ENCODE measurements at regions of chr18 and their contacts with region 1.

Region 1: DNA sequence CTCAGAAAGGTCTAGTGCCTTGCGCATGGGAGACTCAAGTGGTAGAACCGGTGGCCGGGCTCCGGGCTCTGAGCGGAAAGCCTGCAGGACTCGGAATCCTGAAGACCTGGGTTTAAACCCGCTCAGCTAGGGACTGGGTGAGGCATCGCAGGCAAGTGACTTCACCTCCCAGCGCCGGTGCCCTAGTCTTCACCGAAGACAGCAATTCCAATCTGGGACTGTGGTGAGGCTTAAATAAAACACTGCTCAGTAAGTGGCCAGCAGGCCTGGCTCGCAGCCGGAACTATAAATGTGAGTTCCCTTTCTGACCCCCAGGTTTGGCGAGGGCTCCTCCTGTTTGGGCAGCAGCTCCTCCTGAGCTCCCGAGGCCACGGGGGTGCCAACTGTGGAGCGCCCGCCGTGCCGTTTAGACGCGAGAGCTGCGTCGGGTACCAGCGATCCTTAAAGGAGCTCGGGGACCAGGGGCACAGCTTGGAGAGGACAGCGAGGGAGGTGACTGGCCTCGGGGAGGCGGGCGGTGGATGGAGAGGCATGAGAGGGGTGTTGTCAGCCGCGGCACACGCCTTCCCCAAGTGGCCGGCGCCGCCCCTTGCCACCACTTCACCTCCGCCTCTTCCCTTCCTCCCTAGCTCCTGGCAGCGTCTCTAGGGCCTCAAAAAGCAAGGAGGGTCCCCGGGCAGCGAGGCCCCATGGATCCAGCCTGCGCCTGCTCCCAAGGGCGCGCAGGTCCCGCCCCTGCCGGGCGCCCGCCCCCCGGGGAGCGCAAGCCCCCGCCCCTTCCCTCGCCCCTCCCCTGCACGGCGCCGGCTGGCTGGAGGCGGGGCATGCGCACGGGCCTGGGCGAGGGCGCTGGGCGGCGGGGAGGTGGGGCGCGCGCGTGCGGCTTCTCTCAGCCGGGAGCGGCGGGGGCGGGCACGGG is 736 bp upstream of the MTCL1 start:
- DNase-seq: peak; percentile 89
- H3K4me3 ChIP-seq: peak overlapping the region; percentile 38 to 61 (median 54)
- H3K27ac ChIP-seq: peak overlapping the region; percentile 75 to 89 (median 88)
- H3K4me1 ChIP-seq: peaks cover 0 to 26% (median 8%) of the 10 kb centered on the region in 4 donors
- H3K27me3 ChIP-seq: peaks cover 86% of the 10 kb centered on the region
- CTCF ChIP-seq: peak in 1 of 5 experiments; percentile 11
- EP300 ChIP-seq: no peak
- POLR2A ChIP-seq: peak; percentile 36

Region 2: GRCh38 chr18:8771930-8772329 is 67.3 kb after region 1 on chr18:
- in situ Hi-C with region 1: no loop called
- intact Hi-C with region 1: loop called (anchors 10 kb)
- DNase-seq: peak; percentile 36
- H3K4me3 ChIP-seq: no peak overlapping the region
- H3K27ac ChIP-seq: peak overlapping the region in 2 of 4 donors; percentile 52 to 77
- H3K4me1 ChIP-seq: peaks cover 0 to 14% (median 0%) of the 10 kb centered on the region in 4 donors
- H3K27me3 ChIP-seq: no peaks in the 10 kb centered on the region
- CTCF ChIP-seq: no peak
- EP300 ChIP-seq: no peak
- POLR2A ChIP-seq: no peak

Region 3: DNA sequence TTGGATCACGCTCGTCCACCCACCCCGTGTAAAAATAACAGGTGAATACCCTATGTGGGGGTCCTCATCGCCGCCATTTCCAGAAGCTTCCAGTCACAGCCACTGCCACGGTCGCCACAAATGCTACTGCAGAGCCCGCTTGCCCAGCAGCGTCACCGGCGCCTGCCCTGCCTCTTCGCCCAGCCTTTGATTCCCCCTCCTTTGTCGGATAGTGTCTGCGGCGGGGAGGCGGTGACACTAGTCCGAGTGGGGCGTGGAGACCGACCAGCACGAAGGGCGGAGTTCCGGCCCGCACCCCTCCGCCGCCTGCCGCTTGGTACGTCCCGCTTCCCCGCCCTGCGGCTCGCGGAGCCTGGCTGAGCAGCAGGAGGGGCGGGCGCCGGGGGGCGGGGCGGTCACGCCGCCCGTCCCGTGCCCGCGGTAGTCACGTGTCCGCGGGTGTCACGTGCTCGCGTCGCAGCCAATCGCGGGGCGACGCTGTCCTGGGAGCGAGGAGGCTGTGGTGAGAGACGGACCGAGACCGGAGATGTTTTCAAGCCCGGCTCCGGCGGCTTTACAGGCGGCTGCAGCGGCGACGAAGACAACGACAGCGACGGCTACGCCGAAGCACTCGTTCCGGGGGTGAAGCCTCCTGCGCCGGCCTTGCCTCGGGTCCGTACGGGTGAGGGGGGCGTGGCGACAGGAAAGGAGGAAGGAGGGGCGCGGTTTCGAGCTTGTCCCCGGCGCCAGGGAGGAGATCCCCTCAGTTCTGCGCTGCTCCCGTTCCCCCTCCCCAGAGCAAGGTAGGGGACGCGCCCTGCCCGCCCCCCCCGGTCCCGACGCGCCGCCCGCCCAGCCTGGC is 431.9 kb after region 1 on chr18 and contains the start of gene ANKRD12:
- in situ Hi-C with region 1: no loop called
- intact Hi-C with region 1: loop called (anchors 5 kb)
- DNase-seq: peak; percentile 99
- H3K4me3 ChIP-seq: peak within 1 kb of the TSS; percentile 77 to 92 (median 79)
- H3K27ac ChIP-seq: peak within 1 kb of the TSS; percentile 95 to 100 (median 99)
- H3K4me1 ChIP-seq: peaks cover 11 to 67% (median 40%) of the 10 kb centered on the region in 4 donors
- H3K27me3 ChIP-seq: no peaks in the 10 kb centered on the region
- CTCF ChIP-seq: no peak
- EP300 ChIP-seq: no peak
- POLR2A ChIP-seq: peak; percentile 91
- total RNA-seq, gene ANKRD12: 17.5 to 91.8 (median 59.1) TPM